Ascending aorta (tissue), 2 donors: ENCODE measurements at regions of chr10 and their contacts with region 1.

Region 1: GRCh38 chr10:3785257-3785850 is 345 bp upstream of the KLF6 start:
- DNase-seq: peak; percentile 94 to 99
- H3K4me3 ChIP-seq: peak overlapping the region; percentile 97 to 99
- H3K27ac ChIP-seq: peak overlapping the region; percentile 100
- H3K4me1 ChIP-seq: peaks cover 0 to 4% of the 10 kb centered on the region in 2 donors
- H3K27me3 ChIP-seq: no peaks in the 10 kb centered on the region
- CTCF ChIP-seq: no peak

Region 2: DNA sequence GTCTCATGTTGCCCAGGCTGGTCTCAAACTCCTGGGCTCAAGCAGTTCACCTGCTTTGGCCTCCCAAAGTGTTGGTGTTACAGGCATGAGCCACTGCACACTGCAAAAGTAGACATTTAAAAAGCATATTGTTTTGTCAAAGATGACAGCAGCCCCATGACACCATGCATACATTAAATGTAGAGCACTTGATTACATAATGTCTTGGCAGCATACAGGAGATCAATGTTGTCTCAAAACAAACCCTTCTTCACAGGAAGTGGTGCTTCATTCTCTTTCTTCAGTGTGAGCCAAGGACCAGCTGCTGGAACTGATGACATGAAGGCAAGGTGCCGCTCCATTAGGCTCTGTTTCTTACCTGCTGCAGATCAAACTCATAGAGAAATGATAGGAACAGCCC is 218.7 kb before region 1 on chr10:
- intact Hi-C with region 1: no loop called
- DNase-seq: no peak
- H3K4me3 ChIP-seq: no peak overlapping the region
- H3K27ac ChIP-seq: no peak overlapping the region
- H3K4me1 ChIP-seq: peaks cover 0 to 11% of the 10 kb centered on the region in 2 donors
- H3K27me3 ChIP-seq: no peaks in the 10 kb centered on the region
- CTCF ChIP-seq: no peak

Region 3: GRCh38 chr10:3740157-3740871 is 45.0 kb before region 1 on chr10:
- intact Hi-C with region 1: no loop called
- DNase-seq: peak in 1 of 2 donors; percentile 28
- H3K4me3 ChIP-seq: no peak overlapping the region
- H3K27ac ChIP-seq: no peak overlapping the region
- H3K4me1 ChIP-seq: no peaks in the 10 kb centered on the region
- H3K27me3 ChIP-seq: no peaks in the 10 kb centered on the region
- CTCF ChIP-seq: no peak

Region 4: DNA sequence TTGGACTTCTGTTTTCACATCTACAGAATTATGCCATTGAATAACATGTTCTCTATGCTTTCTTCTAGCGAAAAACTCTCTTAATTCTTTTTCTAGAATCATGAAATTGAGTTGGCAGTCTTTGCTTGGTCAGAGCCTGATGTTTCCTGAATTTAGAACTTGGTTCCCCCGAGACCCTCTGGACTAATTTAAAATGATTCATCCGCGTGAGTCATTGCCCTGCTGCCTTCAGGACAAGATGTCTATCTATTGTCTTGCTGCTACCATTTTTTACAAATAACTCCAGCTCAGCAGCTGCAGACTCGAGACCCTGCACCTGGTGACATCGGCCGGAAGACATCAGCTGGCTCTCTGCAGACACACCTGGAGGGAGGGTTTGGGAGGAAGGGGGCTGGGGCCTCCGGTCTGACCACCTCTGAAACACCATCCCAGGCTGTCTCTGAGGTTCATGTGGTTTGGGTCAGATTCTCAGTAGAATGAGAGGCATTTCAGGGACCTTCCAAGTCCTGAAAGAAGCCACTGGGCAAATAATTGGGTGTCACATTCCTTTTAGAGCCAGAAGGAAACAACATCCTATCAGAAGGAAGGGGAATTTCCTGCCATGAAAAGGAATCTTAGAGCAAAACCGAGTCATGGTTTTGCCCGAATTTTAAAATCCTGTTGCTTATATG is 20.6 kb after region 1 on chr10:
- intact Hi-C with region 1: loop called (anchors 1 kb)
- DNase-seq: peak; percentile 55 to 82
- H3K4me3 ChIP-seq: peak overlapping the region in 1 of 2 donors; percentile 23
- H3K27ac ChIP-seq: peak overlapping the region; percentile 88 to 92
- H3K4me1 ChIP-seq: peaks cover 20 to 50% of the 10 kb centered on the region in 2 donors
- H3K27me3 ChIP-seq: no peaks in the 10 kb centered on the region
- CTCF ChIP-seq: no peak

Region 5: GRCh38 chr10:3852147-3852904 is 67.0 kb after region 1 on chr10:
- intact Hi-C with region 1: loop called (anchors 2 kb)
- DNase-seq: peak; percentile 68 to 93
- H3K4me3 ChIP-seq: peak overlapping the region in 1 of 2 donors; percentile 15
- H3K27ac ChIP-seq: peak overlapping the region; percentile 85 to 87
- H3K4me1 ChIP-seq: peaks cover 4 to 36% of the 10 kb centered on the region in 2 donors
- H3K27me3 ChIP-seq: no peaks in the 10 kb centered on the region
- CTCF ChIP-seq: no peak

Region 6: DNA sequence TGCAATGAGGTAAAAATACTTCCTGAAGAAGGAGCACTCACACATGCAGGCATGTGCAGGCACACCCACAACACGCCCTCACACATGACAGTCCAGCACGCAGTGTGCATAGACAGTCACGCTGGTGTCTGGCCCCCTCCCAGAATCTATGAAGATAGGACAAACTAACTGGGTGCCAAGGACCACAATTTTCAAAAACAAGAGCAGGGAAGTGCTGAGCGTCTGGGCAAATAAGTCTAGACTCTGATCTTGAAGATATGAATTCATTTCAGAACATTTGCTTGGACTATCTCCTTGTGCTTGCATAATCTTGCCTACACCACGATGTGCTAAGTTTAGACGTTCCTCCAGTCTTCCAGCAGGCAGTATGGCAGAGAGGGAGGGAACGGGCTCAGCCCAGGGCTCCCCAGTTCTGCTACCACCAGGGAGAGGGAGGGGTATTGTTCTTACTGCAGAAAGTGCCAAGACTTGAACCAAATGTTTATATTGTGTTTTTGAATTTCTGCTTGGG is 276.1 kb after region 1 on chr10:
- intact Hi-C with region 1: loop called (anchors 2 kb)
- DNase-seq: peak; percentile 51 to 92
- H3K4me3 ChIP-seq: peak overlapping the region in 1 of 2 donors; percentile 1
- H3K27ac ChIP-seq: peak overlapping the region; percentile 60 to 71
- H3K4me1 ChIP-seq: peaks cover 5 to 45% of the 10 kb centered on the region in 2 donors
- H3K27me3 ChIP-seq: no peaks in the 10 kb centered on the region
- CTCF ChIP-seq: no peak

Region 7: DNA sequence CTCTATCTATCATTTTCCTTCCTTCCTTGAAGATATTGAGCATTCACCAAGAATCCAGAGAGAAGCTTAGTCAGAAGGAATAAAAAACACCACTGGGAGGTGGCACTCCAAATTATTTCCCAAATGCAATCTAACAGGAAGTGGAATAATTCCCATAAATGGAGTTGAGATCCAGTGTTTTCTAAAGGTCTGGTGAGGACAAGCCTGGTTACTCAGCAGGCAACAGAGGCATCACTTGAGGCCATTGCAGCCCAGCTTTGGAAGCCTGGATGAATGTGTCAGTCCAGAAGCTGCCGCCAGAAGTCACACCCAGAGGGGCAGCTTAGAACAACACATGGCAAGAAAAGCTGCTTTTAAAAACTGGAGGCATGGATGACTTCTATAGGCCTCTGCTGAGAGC is 288.6 kb after region 1 on chr10:
- intact Hi-C with region 1: no loop called
- DNase-seq: peak in 1 of 2 donors; percentile 87
- H3K4me3 ChIP-seq: no peak overlapping the region
- H3K27ac ChIP-seq: peak overlapping the region; percentile 64 to 78
- H3K4me1 ChIP-seq: peaks cover 8 to 42% of the 10 kb centered on the region in 2 donors
- H3K27me3 ChIP-seq: no peaks in the 10 kb centered on the region
- CTCF ChIP-seq: no peak